Naive thymus-derived CD4-positive, alpha-beta T cell (primary cell): ENCODE measurements at regions of chr14 and their contacts with region 1.

Region 1: DNA sequence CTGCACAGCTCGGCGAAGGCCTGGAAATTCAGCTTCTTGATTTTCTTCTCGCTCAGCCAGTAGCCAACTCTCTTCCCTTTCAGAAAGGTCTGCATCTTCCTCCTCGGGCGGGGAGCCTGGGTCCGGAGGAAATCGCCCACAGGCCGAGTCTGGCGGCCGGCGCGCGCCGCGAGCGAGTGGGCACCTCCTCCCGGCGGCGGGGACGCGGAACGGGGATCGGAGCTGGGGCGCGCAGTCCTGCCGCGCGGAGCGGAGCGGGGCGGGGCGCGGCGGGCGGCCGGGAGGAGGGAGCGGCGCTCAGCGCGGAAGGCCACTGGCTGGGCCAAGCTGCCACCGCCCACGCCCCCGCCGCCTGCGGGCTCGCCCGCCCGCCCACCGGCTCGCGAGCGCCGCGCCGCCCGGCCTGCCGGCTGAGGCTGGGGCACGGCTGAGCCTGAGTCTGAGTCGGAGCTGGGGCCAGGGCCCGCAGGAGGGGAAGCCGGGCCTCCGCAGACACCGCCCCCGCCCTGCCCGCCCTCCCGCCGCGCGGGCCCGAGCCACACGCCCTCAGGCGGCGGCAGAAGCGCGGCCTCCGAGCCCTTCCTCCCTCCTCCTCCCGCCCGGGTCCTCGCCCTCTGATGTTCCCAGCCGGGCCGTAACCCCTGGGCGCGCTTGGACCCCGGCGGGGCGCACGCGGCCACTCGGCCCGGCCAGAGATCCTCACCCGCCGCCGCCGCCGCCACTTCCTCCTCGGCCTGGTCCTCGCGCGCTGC is 480 bp downstream of the ITPK1 start:
- DNase-seq: peak; percentile 70 to 94 (median 80)
- ATAC-seq: peak; percentile 89
- H3K4me3 ChIP-seq: peak overlapping the region; percentile 61
- H3K4me3 Mint-ChIP-seq: peak overlapping the region; percentile 67 to 91 (median 84)
- H3K27ac ChIP-seq: peak overlapping the region; percentile 68
- H3K27ac Mint-ChIP-seq: peak overlapping the region in 3 of 9 donors; percentile 29 to 97 (median 69)
- H3K4me1 ChIP-seq: peaks cover 17 to 22% of the 10 kb centered on the region in 2 donors
- H3K4me1 Mint-ChIP-seq: peaks cover 20 to 32% (median 26%) of the 10 kb centered on the region in 7 donors
- H3K27me3 ChIP-seq: no peaks in the 10 kb centered on the region
- H3K27me3 Mint-ChIP-seq: no peaks in the 10 kb centered on the region

Region 2: DNA sequence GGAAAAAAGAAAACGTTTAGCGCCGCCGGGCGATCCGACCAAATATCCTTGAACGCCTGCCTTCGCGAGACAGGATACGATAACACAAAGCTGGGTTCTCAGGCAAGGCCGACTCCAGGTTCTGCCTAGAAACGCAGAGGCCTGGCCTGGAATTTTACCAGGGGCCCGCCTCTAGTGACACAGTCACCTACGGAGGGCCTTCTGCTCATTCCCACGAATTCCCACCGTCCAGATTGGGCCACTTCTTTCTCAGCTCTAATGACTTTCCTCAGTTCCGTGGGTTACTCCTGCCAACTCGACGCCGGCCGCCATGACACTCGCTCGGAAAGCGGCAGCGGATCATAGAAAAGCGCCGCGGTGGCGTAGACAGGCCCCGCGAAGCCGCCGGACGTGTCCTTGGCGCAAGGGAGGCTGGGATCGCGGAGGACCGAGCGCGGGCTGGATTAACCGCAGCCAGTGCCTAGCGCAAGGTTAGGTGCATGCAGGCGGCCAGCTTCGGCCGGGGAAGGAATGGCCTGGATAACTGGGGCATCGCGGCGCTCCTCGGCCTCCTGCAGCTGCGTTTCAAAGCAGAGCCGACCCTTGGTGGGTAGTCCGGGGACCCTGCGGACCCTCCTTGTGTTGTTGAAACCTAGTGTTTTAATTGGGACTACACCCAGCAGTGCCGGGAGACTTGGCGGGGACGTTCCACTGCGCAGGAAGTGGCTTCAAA is 1075.4 kb before region 1 on chr14 and contains the start of gene TRIP11:
- CTCF ChIA-PET with region 1: no interaction called
- POLR2A ChIA-PET with region 1: no interaction called
- intact Hi-C with region 1: loop called in 1 of 2 experiments (anchors 5 kb)
- DNase-seq: peak; percentile 88 to 97 (median 94)
- ATAC-seq: peak; percentile 96
- H3K4me3 ChIP-seq: peak within 1 kb of the TSS; percentile 86
- H3K4me3 Mint-ChIP-seq: peak within 1 kb of the TSS; percentile 91 to 99 (median 96)
- H3K27ac ChIP-seq: peak within 1 kb of the TSS; percentile 84
- H3K27ac Mint-ChIP-seq: peak within 1 kb of the TSS in 7 of 9 donors; percentile 96 to 100 (median 98)
- H3K4me1 ChIP-seq: peaks cover 20 to 21% of the 10 kb centered on the region in 2 donors
- H3K4me1 Mint-ChIP-seq: peaks cover 6 to 50% (median 35%) of the 10 kb centered on the region in 7 donors
- H3K27me3 ChIP-seq: no peaks in the 10 kb centered on the region
- H3K27me3 Mint-ChIP-seq: no peaks in the 10 kb centered on the region
- total RNA-seq, gene TRIP11: 34.1 to 72.4 (median 58.4) TPM

Region 3: DNA sequence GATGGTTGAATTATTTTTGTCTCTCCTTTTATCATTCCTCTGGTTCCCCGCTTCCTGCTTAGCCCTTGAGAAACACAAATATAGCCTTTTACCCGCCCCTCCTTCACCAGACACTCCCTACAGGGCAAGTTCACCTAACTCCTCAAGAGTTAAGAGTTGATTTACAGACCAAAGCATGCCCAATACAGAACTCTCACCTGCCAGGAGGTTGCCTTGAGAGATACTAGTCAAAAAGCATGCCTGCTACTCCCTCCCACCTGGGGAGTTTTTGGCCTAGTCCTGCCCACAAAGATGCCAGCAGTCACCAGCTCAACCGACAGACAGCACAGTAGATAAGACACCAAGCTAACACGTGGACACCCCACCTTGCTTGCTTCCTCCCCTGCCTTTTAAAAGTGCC is 378.0 kb before region 1 on chr14:
- CTCF ChIA-PET with region 1: no interaction called
- POLR2A ChIA-PET with region 1: no interaction called
- intact Hi-C with region 1: no loop called
- DNase-seq: peak in 5 of 9 donors; percentile 12 to 37 (median 23)
- ATAC-seq: peak; percentile 85
- H3K4me3 ChIP-seq: no peak overlapping the region
- H3K4me3 Mint-ChIP-seq: peak overlapping the region; percentile 22 to 76 (median 48)
- H3K27ac ChIP-seq: peak overlapping the region; percentile 15
- H3K27ac Mint-ChIP-seq: peak overlapping the region; percentile 36 to 91 (median 78)
- H3K4me1 ChIP-seq: peaks cover 0 to 15% of the 10 kb centered on the region in 2 donors
- H3K4me1 Mint-ChIP-seq: peaks cover 13 to 29% (median 18%) of the 10 kb centered on the region in 7 donors
- H3K27me3 ChIP-seq: no peaks in the 10 kb centered on the region
- H3K27me3 Mint-ChIP-seq: peaks cover 0 to 26% (median 0%) of the 10 kb centered on the region in 5 donors

Region 4: GRCh38 chr14:92951912-92952471 is 163.3 kb before region 1 on chr14:
- CTCF ChIA-PET with region 1: interaction called, 4 read pairs
- POLR2A ChIA-PET with region 1: no interaction called
- intact Hi-C with region 1: loop called (anchors 1 kb)
- DNase-seq: peak; percentile 48 to 84 (median 74)
- ATAC-seq: peak; percentile 93
- H3K4me3 ChIP-seq: no peak overlapping the region
- H3K4me3 Mint-ChIP-seq: no peak overlapping the region
- H3K27ac ChIP-seq: no peak overlapping the region
- H3K27ac Mint-ChIP-seq: peak overlapping the region in 1 of 9 donors; percentile 26
- H3K4me1 ChIP-seq: no peaks in the 10 kb centered on the region
- H3K4me1 Mint-ChIP-seq: peaks cover 0 to 9% (median 5%) of the 10 kb centered on the region in 7 donors
- H3K27me3 ChIP-seq: no peaks in the 10 kb centered on the region
- H3K27me3 Mint-ChIP-seq: no peaks in the 10 kb centered on the region

Region 5: DNA sequence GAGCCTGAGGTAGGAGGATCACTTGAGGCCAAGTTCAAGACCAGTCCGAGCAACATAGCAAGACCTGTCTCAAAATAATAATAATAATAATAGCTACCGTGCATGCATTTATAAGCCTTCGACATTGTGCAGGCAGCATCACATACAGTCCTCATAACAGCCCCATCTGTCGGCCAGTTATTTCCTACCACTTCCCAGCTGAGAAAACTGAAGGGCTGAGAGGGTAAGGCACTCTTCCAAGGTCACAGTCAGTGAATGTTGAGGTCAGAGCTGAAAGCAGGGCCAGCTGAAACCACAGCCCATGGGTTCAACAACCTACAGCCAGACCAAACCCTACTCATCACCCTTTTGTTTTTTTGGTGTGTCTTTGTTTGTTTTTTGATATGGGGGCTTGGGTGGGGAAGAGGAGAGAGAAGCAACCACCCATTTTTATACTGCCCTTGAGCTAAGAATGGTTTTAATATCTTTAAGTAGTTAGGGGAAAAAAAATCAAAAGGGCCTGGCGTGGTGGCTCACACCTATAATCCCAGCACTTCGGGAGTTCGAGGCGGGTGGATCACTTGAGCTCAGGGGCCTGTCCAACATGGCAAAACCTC is 17.3 kb after region 1 on chr14:
- CTCF ChIA-PET with region 1: interaction called, 108 read pairs
- POLR2A ChIA-PET with region 1: interaction called, 5 read pairs
- intact Hi-C with region 1: loop called in 1 of 2 experiments (anchors 1 kb)
- DNase-seq: peak in 4 of 9 donors; percentile 8 to 28 (median 16)
- ATAC-seq: peak; percentile 70
- H3K4me3 ChIP-seq: no peak overlapping the region
- H3K4me3 Mint-ChIP-seq: no peak overlapping the region
- H3K27ac ChIP-seq: no peak overlapping the region
- H3K27ac Mint-ChIP-seq: no peak overlapping the region
- H3K4me1 ChIP-seq: no peaks in the 10 kb centered on the region
- H3K4me1 Mint-ChIP-seq: peaks cover 0 to 2% (median 0%) of the 10 kb centered on the region in 7 donors
- H3K27me3 ChIP-seq: no peaks in the 10 kb centered on the region
- H3K27me3 Mint-ChIP-seq: peaks cover 0 to 11% (median 0%) of the 10 kb centered on the region in 5 donors

Region 6: GRCh38 chr14:93173943-93174395 is 58.7 kb after region 1 on chr14:
- CTCF ChIA-PET with region 1: interaction called, 24 read pairs
- POLR2A ChIA-PET with region 1: no interaction called
- intact Hi-C with region 1: loop called in 1 of 2 experiments (anchors 1 kb)
- DNase-seq: no peak
- ATAC-seq: no peak
- H3K4me3 ChIP-seq: no peak overlapping the region
- H3K4me3 Mint-ChIP-seq: no peak overlapping the region
- H3K27ac ChIP-seq: no peak overlapping the region
- H3K27ac Mint-ChIP-seq: no peak overlapping the region
- H3K4me1 ChIP-seq: no peaks in the 10 kb centered on the region
- H3K4me1 Mint-ChIP-seq: peaks cover 0 to 4% (median 0%) of the 10 kb centered on the region in 7 donors
- H3K27me3 ChIP-seq: no peaks in the 10 kb centered on the region
- H3K27me3 Mint-ChIP-seq: no peaks in the 10 kb centered on the region

Region 7: DNA sequence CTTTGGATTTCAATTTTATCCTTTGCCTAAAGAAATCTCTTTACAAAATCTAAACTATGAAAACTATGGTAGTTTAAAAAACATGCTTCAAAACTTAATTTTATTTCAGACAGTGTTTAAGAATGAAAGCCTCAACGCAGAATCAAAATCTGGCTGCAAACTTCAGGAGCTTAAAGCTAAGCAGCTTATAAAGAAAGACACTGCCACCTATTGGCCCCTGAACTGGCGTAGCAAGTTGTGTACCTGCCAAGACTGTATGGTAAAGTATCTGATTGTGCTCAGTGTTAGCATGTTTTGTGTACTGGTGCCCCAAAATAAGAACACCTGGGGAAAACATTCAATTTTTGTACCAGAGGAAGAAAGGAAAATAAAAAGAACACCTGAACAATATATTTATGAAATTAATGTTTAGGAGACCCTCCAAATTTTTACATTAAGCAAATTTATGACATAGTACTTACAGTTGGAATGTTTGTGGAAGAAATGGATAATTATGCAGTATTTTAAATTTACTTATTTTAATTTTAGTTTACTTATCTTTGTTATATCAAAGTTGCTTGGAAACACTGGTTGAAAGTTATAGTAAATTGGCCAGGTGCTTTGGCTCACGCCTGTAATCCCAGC is 104.0 kb after region 1 on chr14:
- CTCF ChIA-PET with region 1: interaction called, 21 read pairs
- POLR2A ChIA-PET with region 1: interaction called, 4 read pairs
- intact Hi-C with region 1: loop called (anchors 1 kb)
- DNase-seq: peak in 7 of 9 donors; percentile 27 to 66 (median 56)
- ATAC-seq: peak; percentile 87
- H3K4me3 ChIP-seq: no peak overlapping the region
- H3K4me3 Mint-ChIP-seq: no peak overlapping the region
- H3K27ac ChIP-seq: no peak overlapping the region
- H3K27ac Mint-ChIP-seq: no peak overlapping the region
- H3K4me1 ChIP-seq: no peaks in the 10 kb centered on the region
- H3K4me1 Mint-ChIP-seq: peaks cover 0 to 4% (median 0%) of the 10 kb centered on the region in 7 donors
- H3K27me3 ChIP-seq: no peaks in the 10 kb centered on the region
- H3K27me3 Mint-ChIP-seq: no peaks in the 10 kb centered on the region

Region 8: GRCh38 chr14:93892923-93893558 is 777.8 kb after region 1 on chr14:
- CTCF ChIA-PET with region 1: no interaction called
- POLR2A ChIA-PET with region 1: no interaction called
- intact Hi-C with region 1: loop called in 1 of 2 experiments (anchors 2 kb)
- DNase-seq: peak; percentile 23 to 72 (median 55)
- ATAC-seq: peak; percentile 78
- H3K4me3 ChIP-seq: no peak overlapping the region
- H3K4me3 Mint-ChIP-seq: no peak overlapping the region
- H3K27ac ChIP-seq: no peak overlapping the region
- H3K27ac Mint-ChIP-seq: no peak overlapping the region
- H3K4me1 ChIP-seq: no peaks in the 10 kb centered on the region
- H3K4me1 Mint-ChIP-seq: no peaks in the 10 kb centered on the region
- H3K27me3 ChIP-seq: no peaks in the 10 kb centered on the region
- H3K27me3 Mint-ChIP-seq: peaks cover 17 to 35% (median 23%) of the 10 kb centered on the region in 5 donors